ENCODE measurements at regions of chr3 and their contacts with region 1.

Region 1: GRCh38 chr3:173993299-173993698 is 595.8 kb downstream of the NLGN1 start:
- DNase-seq: peak; percentile 27
- ATAC-seq: peak; percentile 78
- H3K4me3 ChIP-seq: no peak overlapping the region
- H3K27ac ChIP-seq: no peak overlapping the region
- H3K4me1 ChIP-seq: no peaks in the 10 kb centered on the region
- H3K27me3 ChIP-seq: no peaks in the 10 kb centered on the region
- CTCF ChIP-seq: peak; percentile 18 to 45 (median 43); a peak in 4 of 6 replicates
- POLR2A ChIP-seq: no peak
- RAD21 ChIP-seq: peak; percentile 53

Region 2: DNA sequence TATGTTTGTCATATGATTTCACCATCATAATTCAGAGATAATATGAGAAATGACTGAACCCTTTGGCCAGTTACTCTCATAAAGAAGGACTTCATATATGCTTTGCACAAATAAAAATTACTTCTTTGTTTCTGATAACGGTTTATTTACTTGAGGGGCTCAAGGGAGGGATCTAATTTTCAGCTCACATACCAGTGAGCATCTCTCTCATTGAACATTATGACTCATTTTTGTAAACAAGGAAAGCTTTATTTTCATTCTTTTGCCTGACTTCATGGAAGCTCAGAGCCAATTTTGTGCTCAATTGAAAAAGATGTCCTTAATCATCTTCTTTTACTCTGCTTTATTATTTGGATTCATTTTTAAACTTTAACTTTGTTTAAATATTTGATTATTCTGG is 589.9 kb before region 1 on chr3:
- CTCF ChIA-PET with region 1: no interaction called
- POLR2A ChIA-PET with region 1: no interaction called
- RAD21 ChIA-PET with region 1: no interaction called
- intact Hi-C with region 1: loop called (anchors 10 kb)
- DNase-seq: no peak
- ATAC-seq: no peak
- H3K4me3 ChIP-seq: no peak overlapping the region
- H3K27ac ChIP-seq: no peak overlapping the region
- H3K4me1 ChIP-seq: no peaks in the 10 kb centered on the region
- H3K27me3 ChIP-seq: no peaks in the 10 kb centered on the region
- CTCF ChIP-seq: no peak
- POLR2A ChIP-seq: no peak
- RAD21 ChIP-seq: no peak

Region 3: GRCh38 chr3:173416070-173416469 is 577.2 kb before region 1 on chr3:
- CTCF ChIA-PET with region 1: no interaction called
- POLR2A ChIA-PET with region 1: no interaction called
- RAD21 ChIA-PET with region 1: no interaction called
- intact Hi-C with region 1: no loop called
- DNase-seq: no peak
- ATAC-seq: no peak
- H3K4me3 ChIP-seq: no peak overlapping the region
- H3K27ac ChIP-seq: no peak overlapping the region
- H3K4me1 ChIP-seq: no peaks in the 10 kb centered on the region
- H3K27me3 ChIP-seq: no peaks in the 10 kb centered on the region
- CTCF ChIP-seq: no peak
- POLR2A ChIP-seq: no peak
- RAD21 ChIP-seq: no peak

Region 4: GRCh38 chr3:174051191-174051590 is 57.9 kb after region 1 on chr3:
- CTCF ChIA-PET with region 1: no interaction called
- POLR2A ChIA-PET with region 1: no interaction called
- RAD21 ChIA-PET with region 1: no interaction called
- intact Hi-C with region 1: loop called (anchors 10 kb)
- DNase-seq: no peak
- ATAC-seq: no peak
- H3K4me3 ChIP-seq: no peak overlapping the region
- H3K27ac ChIP-seq: no peak overlapping the region
- H3K4me1 ChIP-seq: no peaks in the 10 kb centered on the region
- H3K27me3 ChIP-seq: no peaks in the 10 kb centered on the region
- CTCF ChIP-seq: no peak
- POLR2A ChIP-seq: no peak
- RAD21 ChIP-seq: no peak

Measured in HCT116 (cell line).